ENCODE measurements at regions of chr16 and their contacts with region 1.

Region 1: DNA sequence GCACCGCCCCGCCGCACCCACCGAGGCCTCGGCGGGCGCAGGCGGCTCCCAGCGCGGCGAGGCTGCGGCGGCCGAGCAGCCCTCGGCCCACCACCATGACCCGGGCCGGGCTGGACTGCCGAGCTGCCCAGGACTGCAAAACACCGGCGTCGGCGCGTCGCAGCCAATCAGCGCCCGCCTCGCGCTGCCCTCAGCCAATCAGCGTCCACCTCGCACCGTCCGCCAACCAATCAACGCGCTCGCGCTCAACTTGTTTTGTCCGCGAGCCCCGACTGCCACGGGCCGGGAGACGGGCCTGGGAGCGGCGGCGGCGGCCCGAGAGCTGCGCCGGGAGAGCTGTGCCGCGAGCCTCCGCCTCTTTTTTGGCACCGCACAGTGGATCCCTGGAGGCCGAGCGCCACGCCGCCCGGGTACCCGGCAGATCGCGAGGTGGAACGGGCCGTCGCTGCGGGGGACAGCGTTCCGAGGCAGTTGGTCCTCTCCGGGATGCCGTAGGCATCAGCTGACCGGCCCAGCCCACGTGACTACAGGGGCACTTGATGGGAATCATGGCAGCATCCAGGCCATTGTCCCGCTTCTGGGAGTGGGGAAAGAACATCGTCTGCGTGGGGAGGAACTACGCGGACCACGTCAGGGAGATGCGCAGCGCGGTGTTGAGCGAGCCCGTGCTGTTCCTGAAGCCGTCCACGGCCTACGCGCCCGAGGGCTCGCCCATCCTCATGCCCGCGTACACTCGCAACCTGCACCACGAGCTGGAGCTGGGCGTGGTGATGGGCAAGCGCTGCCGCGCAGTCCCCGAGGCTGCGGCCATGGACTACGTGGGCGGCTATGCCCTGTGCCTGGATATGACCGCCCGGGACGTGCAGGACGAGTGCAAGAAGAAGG is at the starts of genes FAHD1 and HAGH:
- DNase-seq: peak; percentile 94
- ATAC-seq: peak; percentile 93
- H3K4me3 ChIP-seq: peak within 1 kb of the TSS; percentile 73
- H3K27ac ChIP-seq: peak within 1 kb of the TSS; percentile 58
- H3K4me1 ChIP-seq: peaks cover 6% of the 10 kb centered on the region; the same call in 1 of the 2 replicates
- H3K27me3 ChIP-seq: no peaks in the 10 kb centered on the region
- CTCF ChIP-seq: no peak
- POLR2A ChIP-seq: peak; percentile 67; the same call in 1 of the 2 replicates
- RAD21 ChIP-seq: no peak
- total RNA-seq, gene FAHD1: 85.8 and 85.9 TPM in 2 replicates
- total RNA-seq, gene HAGH: 30.8 and 35.6 TPM in 2 replicates

Region 2: GRCh38 chr16:1782352-1783091 is 44.4 kb before region 1 on chr16 and contains the starts of genes NUBP2 and SPSB3:
- CTCF ChIA-PET with region 1: interaction called, 4 read pairs
- POLR2A ChIA-PET with region 1: no interaction called
- dilution Hi-C with region 1: no loop called
- in situ Hi-C with region 1: no loop called
- intact Hi-C with region 1: loop called (anchors 5 kb)
- DNase-seq: peak; percentile 100
- ATAC-seq: peak; percentile 91
- H3K4me3 ChIP-seq: peak within 1 kb of the TSS; percentile 79
- H3K27ac ChIP-seq: peak within 1 kb of the TSS; percentile 27; the same call in 1 of the 2 replicates
- H3K4me1 ChIP-seq: peaks cover 3% of the 10 kb centered on the region; the same call in 1 of the 2 replicates
- H3K27me3 ChIP-seq: no peaks in the 10 kb centered on the region
- CTCF ChIP-seq: no peak
- POLR2A ChIP-seq: no peak
- RAD21 ChIP-seq: no peak
- total RNA-seq, gene NUBP2: 51.1 and 131 TPM in 2 replicates
- total RNA-seq, gene SPSB3: 9.1 and 10.6 TPM in 2 replicates

Measured in IMR-90 (cell line).